Lower leg skin (tissue), 4 donors: ENCODE measurements at regions of chr2 and their contacts with region 1.

Region 1: GRCh38 chr2:113889471-113890252 is at the start of gene ACTR3:
- DNase-seq: peak; percentile 97 to 99
- H3K4me3 ChIP-seq: peak within 1 kb of the TSS; percentile 96
- CTCF ChIP-seq: no peak
- POLR2A ChIP-seq: peak in 1 of 2 donors; percentile 2
- total RNA-seq, gene ACTR3: 92.5 to 154 (median 115) TPM

Region 2: DNA sequence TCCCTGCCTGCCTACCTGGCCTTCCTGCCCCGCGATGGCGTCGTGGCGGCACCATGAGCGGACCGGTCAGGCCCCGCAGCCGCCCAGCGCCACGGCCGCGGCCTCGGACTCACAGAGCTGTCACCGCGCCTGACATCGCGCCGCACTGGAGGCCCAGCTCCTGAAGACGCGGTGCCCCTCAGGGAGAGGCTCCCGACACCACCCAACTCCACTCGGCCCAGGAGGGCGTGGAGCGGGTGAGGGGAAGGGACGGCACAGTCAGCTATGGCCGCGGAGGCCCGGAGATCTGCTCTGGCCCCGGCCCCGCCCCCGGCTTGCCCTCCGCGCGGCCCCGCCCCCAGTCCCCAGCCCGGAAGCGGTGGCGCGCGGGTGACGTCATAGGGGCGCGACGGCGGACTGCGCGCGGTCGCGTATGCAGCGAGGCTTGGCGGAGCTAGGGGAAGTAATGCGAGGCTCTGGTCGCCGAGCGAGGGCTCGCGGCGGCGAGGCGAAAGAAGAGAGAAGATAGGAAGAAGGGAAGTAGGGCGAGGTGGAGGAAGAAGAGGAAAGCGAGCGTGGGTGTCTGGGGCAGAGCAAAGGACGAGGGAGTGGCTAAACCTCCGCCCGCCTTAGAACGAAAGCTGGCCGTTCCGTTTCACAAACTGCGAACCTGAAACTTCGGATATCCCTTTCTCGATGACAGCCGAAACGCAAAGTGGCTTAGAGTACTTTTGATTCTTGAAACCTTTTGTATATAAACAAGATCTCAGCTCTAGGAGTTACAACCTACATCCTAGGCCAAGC is 133.1 kb before region 1 on chr2 and contains the start of gene SLC35F5:
- intact Hi-C with region 1: loop called (anchors 10 kb)
- DNase-seq: peak; percentile 87 to 98
- H3K4me3 ChIP-seq: peak within 1 kb of the TSS; percentile 94
- CTCF ChIP-seq: no peak
- POLR2A ChIP-seq: peak in 1 of 2 donors; percentile 57
- total RNA-seq, gene SLC35F5: 75.1 to 126 (median 81.9) TPM